ENCODE measurements at regions of chr16 and their contacts with region 1.

Region 1: GRCh38 chr16:4766874-4767628 is at the start of gene ZNF500:
- DNase-seq: peak; percentile 91
- H3K4me3 ChIP-seq: peak within 1 kb of the TSS; percentile 73 to 89 (median 78)
- H3K27ac ChIP-seq: peak within 1 kb of the TSS; percentile 88
- H3K4me1 ChIP-seq: peaks cover 14% of the 10 kb centered on the region
- H3K27me3 ChIP-seq: no peaks in the 10 kb centered on the region
- CTCF ChIP-seq: no peak
- total RNA-seq, gene ZNF500: 13.0 to 14.2 TPM

Region 2: GRCh38 chr16:4450926-4451619 is 316.0 kb before region 1 on chr16:
- CTCF ChIA-PET with region 1: no interaction called
- dilution Hi-C with region 1: no loop called
- in situ Hi-C with region 1: no loop called
- intact Hi-C with region 1: no loop called
- DNase-seq: no peak
- H3K4me3 ChIP-seq: no peak overlapping the region
- H3K27ac ChIP-seq: no peak overlapping the region
- H3K4me1 ChIP-seq: no peaks in the 10 kb centered on the region
- H3K27me3 ChIP-seq: no peaks in the 10 kb centered on the region
- CTCF ChIP-seq: no peak

Region 3: DNA sequence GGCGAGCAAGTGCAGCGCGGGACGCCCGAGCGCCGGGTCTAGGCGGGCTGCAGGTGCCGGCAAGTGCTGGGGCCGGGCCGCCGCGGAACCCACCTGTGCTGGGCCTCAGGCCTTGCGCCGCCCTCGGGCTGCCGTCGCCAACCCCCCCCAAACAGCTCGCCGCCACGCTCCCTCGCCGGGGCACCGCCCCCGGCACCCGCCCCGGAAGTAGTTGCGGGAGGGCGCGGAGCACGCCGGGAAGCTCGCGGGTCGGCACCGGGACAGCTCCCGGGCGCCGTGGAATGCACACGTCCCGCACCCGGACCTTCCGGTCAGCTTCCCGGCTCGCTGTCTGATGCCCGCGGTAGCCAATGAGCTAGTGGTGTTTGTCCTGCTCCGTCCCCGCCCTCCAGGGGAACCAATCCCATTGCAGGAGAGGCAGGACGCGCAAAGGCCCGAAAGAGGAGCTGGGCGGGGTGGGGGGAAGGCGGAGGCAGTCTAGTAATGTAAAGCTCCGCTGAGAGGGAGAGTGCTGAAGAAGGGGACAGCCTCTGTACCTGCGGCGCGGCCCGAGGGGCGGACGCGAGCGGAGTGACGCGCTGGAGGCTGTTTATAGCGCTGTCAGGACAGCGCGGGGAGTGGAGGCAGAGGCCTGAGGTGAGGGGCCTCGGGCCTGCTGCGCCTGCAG is 32.9 kb before region 1 on chr16 and contains the starts of genes ANKS3 and DNAAF8:
- CTCF ChIA-PET with region 1: no interaction called
- dilution Hi-C with region 1: no loop called
- in situ Hi-C with region 1: no loop called
- intact Hi-C with region 1: loop called (anchors 1 kb)
- DNase-seq: peak; percentile 98
- H3K4me3 ChIP-seq: peak within 1 kb of the TSS; percentile 80 to 98 (median 92)
- H3K27ac ChIP-seq: peak within 1 kb of the TSS; percentile 83
- H3K4me1 ChIP-seq: peaks cover 6% of the 10 kb centered on the region
- H3K27me3 ChIP-seq: no peaks in the 10 kb centered on the region
- CTCF ChIP-seq: no peak
- total RNA-seq, gene ANKS3: 14.5 to 24.3 TPM
- total RNA-seq, gene DNAAF8: 0.17 to 0.71 TPM

Region 4: DNA sequence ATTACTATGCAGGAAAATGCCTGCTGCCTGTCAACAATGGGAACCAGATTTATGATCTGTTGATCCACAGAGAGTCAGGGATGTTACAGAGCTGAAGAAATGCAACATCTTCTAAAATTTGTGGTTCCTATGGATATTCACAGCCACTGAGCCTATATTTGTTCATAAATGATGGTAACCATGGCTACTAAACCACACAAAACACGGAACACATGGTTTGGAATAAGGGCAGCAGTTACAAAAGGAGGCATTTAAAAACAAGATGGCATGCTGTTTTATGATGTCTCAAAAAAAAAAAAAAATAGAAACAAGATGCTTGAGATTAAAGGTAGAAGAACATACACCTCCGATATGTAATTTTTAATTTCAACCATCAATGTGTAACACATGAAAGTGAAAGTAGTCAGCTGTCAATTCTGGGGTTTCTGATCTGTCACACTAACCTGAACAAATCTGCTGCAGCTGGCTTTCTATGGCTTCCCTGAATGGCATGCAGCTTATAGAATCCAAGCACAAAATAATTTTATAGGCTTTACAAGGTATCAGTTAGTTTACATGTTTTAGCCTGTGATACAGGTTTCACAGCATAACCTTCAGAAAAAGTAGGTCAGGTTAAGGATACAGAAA is 66.4 kb after region 1 on chr16:
- CTCF ChIA-PET with region 1: no interaction called
- dilution Hi-C with region 1: loop called (anchors 5 kb)
- in situ Hi-C with region 1: no loop called
- intact Hi-C with region 1: no loop called
- DNase-seq: no peak
- H3K4me3 ChIP-seq: no peak overlapping the region
- H3K27ac ChIP-seq: no peak overlapping the region
- H3K4me1 ChIP-seq: no peaks in the 10 kb centered on the region
- H3K27me3 ChIP-seq: no peaks in the 10 kb centered on the region
- CTCF ChIP-seq: no peak

Region 5: DNA sequence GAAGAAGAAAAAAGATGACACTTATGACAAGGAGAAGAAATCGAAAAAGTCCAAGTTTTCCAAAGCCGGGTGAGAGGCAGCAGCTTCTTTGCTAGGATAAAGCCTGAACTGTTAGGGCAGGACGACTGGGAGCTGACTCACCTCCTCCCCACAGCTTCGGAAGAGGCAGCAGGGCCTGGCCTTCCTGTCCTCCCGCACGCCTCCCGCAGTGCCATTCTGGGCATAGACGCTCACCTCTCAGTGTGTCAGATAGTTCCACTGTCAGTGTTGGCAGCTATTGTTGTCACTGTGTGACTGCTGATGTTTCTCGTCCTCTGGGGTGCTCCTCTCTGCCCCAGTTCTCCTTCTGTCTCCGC is 92.8 kb after region 1 on chr16:
- CTCF ChIA-PET with region 1: no interaction called
- dilution Hi-C with region 1: loop called (anchors 5 kb)
- in situ Hi-C with region 1: no loop called
- intact Hi-C with region 1: no loop called
- DNase-seq: peak; percentile 76
- H3K4me3 ChIP-seq: no peak overlapping the region
- H3K27ac ChIP-seq: peak overlapping the region; percentile 74
- H3K4me1 ChIP-seq: peaks cover 37% of the 10 kb centered on the region
- H3K27me3 ChIP-seq: no peaks in the 10 kb centered on the region
- CTCF ChIP-seq: no peak